ENCODE measurements at regions of chr11 and their contacts with region 1.

Region 1: DNA sequence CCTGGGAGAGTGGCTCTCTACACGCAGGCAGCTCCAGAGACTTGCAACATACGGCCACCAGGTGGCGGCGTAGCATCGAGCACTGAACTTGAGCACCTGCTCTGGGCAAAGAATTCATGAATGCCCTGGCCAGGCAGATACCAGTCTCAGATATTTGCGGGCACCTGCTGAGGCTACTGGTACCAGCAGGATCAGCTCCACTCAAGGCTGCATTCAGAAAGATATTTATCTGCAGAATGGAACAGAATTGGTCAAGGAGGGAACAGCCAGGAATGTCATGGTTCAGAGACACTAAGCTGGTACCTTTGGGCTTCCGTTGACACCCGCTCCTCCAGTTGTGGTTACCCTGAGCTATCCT is 10.8 kb upstream of the CCDC86 start:
- DNase-seq: peak; percentile 75 to 98 (median 90)

Region 2: GRCh38 chr11:60887556-60887955 is 56.4 kb after region 1 on chr11:
- intact Hi-C with region 1: loop called (anchors 1 kb)
- DNase-seq: peak in 3 of 10 donors; percentile 38 to 89 (median 55)

Region 3: DNA sequence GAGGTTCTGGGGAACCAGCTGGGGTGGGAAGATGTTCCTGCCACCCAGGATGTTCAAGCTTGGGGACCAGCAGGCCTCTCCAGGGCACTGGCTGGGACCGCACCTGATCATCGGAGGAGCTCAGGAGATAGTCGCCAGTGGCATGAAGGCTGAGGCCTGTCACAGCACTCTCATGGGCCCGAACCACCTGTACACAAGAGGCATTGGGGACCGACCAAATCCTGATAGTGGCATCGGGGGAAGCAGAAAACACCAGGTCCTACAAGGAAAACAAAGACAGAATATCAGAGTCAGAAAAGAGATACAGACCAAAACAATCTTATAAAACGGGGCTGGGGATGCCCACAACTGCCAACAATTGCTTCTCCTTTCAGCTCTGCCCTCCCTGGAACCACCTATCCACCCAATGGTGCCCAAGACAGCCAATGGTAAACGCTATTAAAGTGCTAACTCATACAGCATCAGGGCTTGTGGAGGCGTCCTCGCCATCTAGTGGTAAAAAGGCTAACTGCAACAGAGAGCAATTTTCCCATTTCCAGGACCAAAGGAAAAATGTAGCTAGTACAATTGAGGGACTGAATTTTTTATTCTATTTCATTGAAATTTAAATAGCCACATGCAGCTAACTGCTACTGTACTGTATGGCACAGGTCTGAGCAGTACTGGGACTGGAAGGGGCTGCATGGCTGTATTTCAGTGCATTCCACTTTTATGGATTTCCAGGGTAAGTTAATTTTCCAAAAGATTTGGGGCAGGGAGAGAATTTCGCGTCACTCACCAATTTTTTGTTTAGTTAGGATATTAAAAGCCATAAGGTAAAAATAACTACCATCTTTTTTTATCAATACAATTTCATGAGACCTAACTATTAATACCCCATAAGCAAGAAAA is 68.2 kb after region 1 on chr11:
- intact Hi-C with region 1: loop called (anchors 1 kb)
- DNase-seq: no peak

Region 4: DNA sequence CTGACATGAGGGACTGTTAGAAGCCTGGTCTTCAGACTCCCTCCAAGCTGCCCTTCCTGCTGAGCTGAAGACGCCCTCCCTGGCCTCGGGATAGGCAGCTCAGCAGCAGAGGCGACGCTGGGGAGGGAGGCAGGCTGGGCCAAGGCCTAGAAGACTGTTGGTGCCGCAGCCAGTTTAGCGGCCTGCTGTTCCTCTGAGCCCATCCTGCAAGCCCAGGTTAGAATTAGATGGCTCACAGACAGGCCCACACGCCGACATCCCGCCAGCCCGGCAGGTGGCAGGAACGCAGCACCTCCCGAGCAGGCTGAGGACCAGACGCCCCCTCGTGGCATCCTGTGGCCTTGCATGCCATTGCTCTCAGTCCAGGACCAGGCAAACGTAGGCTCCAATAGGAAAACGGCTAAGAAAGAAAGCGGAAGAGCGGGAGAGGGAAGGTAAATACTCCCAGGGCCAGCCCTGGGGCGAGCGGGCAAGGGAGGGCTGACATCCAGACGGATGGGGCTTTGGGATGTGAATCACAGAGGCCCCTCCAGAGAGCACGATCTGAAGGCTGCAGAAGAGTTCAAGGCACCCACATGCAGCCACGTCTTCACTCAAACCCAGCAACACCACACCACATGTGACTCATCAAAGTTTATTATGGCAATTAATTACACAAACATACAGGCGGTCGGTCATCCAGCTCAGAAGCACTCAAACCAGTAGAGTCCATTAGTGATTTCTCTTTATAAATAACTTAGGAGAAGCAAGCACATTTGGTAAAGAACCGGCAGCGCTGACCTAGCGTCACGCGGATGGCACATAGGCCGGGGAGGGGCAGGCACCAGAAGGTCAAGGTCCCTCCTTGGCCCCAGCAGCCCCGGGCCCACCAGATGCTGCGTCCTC is 298.8 kb after region 1 on chr11:
- intact Hi-C with region 1: loop called (anchors 2 kb)
- DNase-seq: peak; percentile 83 to 98 (median 92)

Region 5: GRCh38 chr11:61187505-61188130 is 356.5 kb after region 1 on chr11:
- intact Hi-C with region 1: loop called (anchors 5 kb)
- DNase-seq: peak in 8 of 10 donors; percentile 15 to 90 (median 74)

Measured in posterior cingulate gyrus (tissue), 11 donors.